PC-9 (cell line): ENCODE measurements at regions of chr9 and their contacts with region 1.

Region 1: DNA sequence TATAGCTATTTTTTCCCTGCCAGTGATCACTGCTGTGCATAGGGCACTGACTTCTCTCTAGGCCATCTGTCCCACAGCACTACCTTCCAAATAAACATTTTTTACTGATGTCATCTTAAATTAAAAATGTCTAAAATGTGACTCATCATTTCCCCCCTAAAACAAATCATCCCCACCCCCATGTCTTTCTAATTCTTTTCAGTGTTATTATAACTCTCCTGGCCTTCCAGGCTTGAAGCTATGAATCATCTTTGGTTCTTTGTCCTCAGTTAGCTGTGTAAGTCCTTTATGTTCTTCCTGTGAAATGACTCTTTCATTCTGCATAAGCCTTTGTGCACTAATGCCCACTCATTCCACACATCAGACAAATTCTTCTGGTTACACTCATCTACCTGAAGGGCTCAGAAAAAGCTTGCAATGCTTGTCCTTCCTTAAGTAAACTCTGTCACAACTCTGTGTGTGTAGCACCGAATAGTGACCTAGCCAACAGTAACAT is 78.1 kb downstream of the CFAP95 start:
- DNase-seq: peak; percentile 29 to 95
- H3K4me3 ChIP-seq: no peak overlapping the region
- H3K27ac ChIP-seq: peak overlapping the region; percentile 78
- H3K4me1 ChIP-seq: peaks cover 45% of the 10 kb centered on the region
- H3K27me3 ChIP-seq: no peaks in the 10 kb centered on the region
- CTCF ChIP-seq: no peak

Region 2: DNA sequence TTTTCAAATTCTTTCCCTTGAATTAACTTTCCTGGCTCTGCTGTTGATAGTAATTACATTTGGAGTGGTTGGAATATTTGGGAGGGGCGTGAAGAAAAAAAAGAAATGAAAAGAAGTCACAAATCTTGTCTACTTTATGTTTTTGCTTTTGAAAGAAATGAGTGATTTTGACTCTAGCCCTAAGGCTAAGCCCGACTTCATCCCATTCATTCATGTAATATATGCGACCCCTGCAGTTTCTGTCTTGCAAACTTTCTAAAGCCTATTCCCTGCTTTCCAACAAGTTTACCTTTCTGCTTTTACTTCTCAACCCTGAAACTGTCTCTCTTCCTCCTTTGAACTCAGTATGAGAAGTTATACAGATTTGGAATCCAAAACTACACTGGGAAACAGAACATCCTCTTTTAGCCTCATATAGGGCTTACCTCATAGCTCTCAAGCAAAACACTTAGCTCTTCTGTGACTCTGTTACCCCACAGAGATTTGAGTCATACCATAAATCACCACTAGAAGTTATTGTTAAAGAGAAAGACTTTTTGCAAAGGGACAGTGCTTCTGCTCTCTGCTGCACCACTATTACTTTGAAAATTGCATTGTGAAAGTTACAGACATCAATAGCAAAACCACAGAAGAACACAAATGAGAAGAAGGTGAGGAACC is 76.5 kb before region 1 on chr9:
- CTCF ChIA-PET with region 1: no interaction called
- POLR2A ChIA-PET with region 1: no interaction called
- intact Hi-C with region 1: no loop called
- DNase-seq: no peak
- H3K4me3 ChIP-seq: no peak overlapping the region
- H3K27ac ChIP-seq: no peak overlapping the region
- H3K4me1 ChIP-seq: no peaks in the 10 kb centered on the region
- H3K27me3 ChIP-seq: no peaks in the 10 kb centered on the region
- CTCF ChIP-seq: no peak

Region 3: DNA sequence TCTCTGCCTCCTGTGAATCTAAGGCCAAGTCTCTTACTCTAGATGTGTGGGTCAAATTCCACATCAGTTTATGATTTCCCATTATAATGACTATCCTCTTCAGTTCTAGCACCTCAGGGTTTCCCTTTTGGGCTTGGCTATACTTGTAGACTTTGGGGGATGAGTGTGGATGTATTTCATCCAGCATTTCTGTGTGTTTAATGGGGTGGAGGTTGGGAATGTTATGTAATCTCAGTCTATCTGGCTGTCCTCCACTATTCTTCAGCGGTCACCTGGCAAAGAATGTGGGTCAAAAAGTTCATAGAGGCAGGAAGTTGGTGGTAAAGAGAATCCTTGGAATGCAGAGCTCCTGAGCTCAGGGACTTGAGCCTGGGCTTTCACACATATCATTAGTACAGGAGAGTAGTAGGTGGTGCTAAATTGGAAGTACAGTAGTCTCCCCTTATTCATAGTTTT is 13.3 kb before region 1 on chr9:
- CTCF ChIA-PET with region 1: interaction called, 4 read pairs
- POLR2A ChIA-PET with region 1: interaction called, 7 read pairs
- intact Hi-C with region 1: loop called (anchors 1 kb)
- DNase-seq: peak; percentile 73 to 92
- H3K4me3 ChIP-seq: no peak overlapping the region
- H3K27ac ChIP-seq: peak overlapping the region; percentile 74
- H3K4me1 ChIP-seq: peaks cover 40% of the 10 kb centered on the region
- H3K27me3 ChIP-seq: no peaks in the 10 kb centered on the region
- CTCF ChIP-seq: no peak

Region 4: DNA sequence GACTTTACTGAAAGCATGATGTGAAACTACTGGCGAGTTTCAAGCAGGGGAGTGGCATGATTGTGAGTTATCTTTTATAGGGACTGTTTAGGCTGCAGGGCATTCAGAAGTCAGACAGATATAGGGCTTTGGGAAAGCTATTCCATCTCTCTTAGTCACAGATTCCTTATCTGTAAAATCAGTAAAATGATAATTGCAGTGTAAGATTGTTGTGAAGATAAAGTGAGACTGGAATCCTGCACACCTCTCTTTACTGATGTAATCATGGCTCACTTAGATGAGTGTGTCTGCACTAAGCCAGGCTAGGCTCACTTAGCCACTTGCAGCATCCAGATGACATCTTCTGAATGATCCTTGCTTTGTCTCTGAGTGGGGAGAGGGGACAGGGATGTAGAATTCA is 63.1 kb after region 1 on chr9:
- CTCF ChIA-PET with region 1: no interaction called
- POLR2A ChIA-PET with region 1: no interaction called
- intact Hi-C with region 1: loop called (anchors 10 kb)
- DNase-seq: peak in 1 of 2 experiments; percentile 81
- H3K4me3 ChIP-seq: no peak overlapping the region
- H3K27ac ChIP-seq: peak overlapping the region; percentile 70
- H3K4me1 ChIP-seq: peaks cover 19% of the 10 kb centered on the region
- H3K27me3 ChIP-seq: no peaks in the 10 kb centered on the region
- CTCF ChIP-seq: no peak

Region 5: DNA sequence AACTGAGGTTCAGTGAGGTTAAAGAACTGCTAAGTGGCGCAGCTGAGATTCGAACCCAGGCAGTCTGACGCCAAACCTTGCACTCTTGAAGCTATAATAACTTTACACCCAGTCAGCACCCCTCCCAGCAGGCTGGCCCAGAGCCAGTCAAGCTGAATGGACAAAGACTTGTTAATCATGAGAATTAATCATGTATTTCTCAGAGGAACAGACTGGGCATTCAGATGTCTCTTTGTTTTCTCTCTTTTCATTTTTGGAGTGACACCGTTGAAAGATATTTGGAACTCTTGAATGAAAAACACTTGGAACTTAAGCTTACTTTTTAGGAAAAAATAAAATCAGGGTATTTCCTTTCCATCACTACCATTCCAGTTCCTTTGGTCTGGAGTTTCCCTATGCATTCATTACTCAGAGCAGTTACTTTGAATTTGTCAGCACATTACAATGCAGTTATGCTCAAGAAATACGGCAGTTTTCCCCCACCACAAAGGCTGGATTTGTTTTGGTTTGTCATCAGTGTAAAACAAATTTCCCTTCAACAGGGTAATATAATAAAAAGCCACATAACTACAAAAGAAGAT is 122.3 kb after region 1 on chr9:
- CTCF ChIA-PET with region 1: no interaction called
- POLR2A ChIA-PET with region 1: no interaction called
- intact Hi-C with region 1: no loop called
- DNase-seq: peak; percentile 51 to 62
- H3K4me3 ChIP-seq: no peak overlapping the region
- H3K27ac ChIP-seq: 0 out of 2 replicates have a peak overlapping the region, but pooled peaks have one; percentile 19
- H3K4me1 ChIP-seq: peaks cover 21% of the 10 kb centered on the region
- H3K27me3 ChIP-seq: no peaks in the 10 kb centered on the region
- CTCF ChIP-seq: no peak